Panc1 (cell line): ENCODE measurements at regions of chr2 and their contacts with region 1.

Region 1: GRCh38 chr2:44184106-44184505 is 15.4 kb downstream of the PPM1B start:
- DNase-seq: no peak
- ATAC-seq: no peak
- H3K4me3 ChIP-seq: no peak overlapping the region
- H3K27ac ChIP-seq: no peak overlapping the region
- H3K4me1 ChIP-seq: peaks cover 3% of the 10 kb centered on the region; the same call in 1 of the 2 replicates
- H3K27me3 ChIP-seq: no peaks in the 10 kb centered on the region
- CTCF ChIP-seq: no peak

Region 2: GRCh38 chr2:44433881-44434280 is 249.8 kb after region 1 on chr2:
- CTCF ChIA-PET with region 1: interaction called, 11 read pairs
- POLR2A ChIA-PET with region 1: no interaction called
- in situ Hi-C with region 1: no loop called
- intact Hi-C with region 1: no loop called
- DNase-seq: no peak
- ATAC-seq: no peak
- H3K4me3 ChIP-seq: no peak overlapping the region
- H3K27ac ChIP-seq: no peak overlapping the region
- H3K4me1 ChIP-seq: 0 out of 2 replicates have a peak, but pooled peaks cover 3% of the 10 kb centered on the region
- H3K27me3 ChIP-seq: no peaks in the 10 kb centered on the region
- CTCF ChIP-seq: no peak

Region 3: GRCh38 chr2:44596537-44597320 is 412.6 kb after region 1 on chr2:
- CTCF ChIA-PET with region 1: no interaction called
- POLR2A ChIA-PET with region 1: no interaction called
- in situ Hi-C with region 1: no loop called
- intact Hi-C with region 1: no loop called
- DNase-seq: no peak
- ATAC-seq: no peak
- H3K4me3 ChIP-seq: no peak overlapping the region
- H3K27ac ChIP-seq: no peak overlapping the region
- H3K4me1 ChIP-seq: no peaks in the 10 kb centered on the region
- H3K27me3 ChIP-seq: no peaks in the 10 kb centered on the region
- CTCF ChIP-seq: no peak